Activated naive CD4-positive, alpha-beta T cell treated with anti-CD3 and anti-CD28 coated beads for 36 hours (primary cell): ENCODE measurements at regions of chr18 and their contacts with region 1.

Region 1: DNA sequence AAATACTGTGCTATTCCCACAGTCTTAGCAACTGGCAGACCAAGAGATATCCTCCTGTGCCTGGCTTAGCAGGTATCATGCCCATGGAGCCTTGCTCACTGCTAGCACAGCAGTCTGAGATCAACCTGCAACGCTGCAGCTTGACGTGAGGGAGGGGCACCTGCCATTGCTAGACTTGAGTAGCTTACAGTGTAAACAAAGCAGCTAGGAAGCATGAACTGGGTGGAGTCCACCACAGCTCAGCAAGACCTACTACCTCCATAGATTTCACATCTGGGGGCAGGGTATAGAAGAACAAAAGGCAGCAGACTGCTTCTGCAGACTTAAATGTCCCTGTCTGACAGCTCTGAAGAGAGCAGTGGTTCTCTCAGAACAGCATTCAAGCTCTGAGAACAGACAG is 74.8 kb downstream of the AKAIN1 start:
- DNase-seq: no peak
- H3K4me3 Mint-ChIP-seq: no peak overlapping the region
- H3K27ac Mint-ChIP-seq: no peak overlapping the region
- H3K4me1 Mint-ChIP-seq: peaks cover 8% of the 10 kb centered on the region
- H3K27me3 Mint-ChIP-seq: no peaks in the 10 kb centered on the region

Region 2: GRCh38 chr18:5142859-5143258 is 20.6 kb after region 1 on chr18:
- CTCF ChIA-PET with region 1: no interaction called
- intact Hi-C with region 1: loop called (anchors 1 kb)
- DNase-seq: no peak
- H3K4me3 Mint-ChIP-seq: no peak overlapping the region
- H3K27ac Mint-ChIP-seq: no peak overlapping the region
- H3K4me1 Mint-ChIP-seq: peaks cover 26% of the 10 kb centered on the region
- H3K27me3 Mint-ChIP-seq: no peaks in the 10 kb centered on the region

Region 3: DNA sequence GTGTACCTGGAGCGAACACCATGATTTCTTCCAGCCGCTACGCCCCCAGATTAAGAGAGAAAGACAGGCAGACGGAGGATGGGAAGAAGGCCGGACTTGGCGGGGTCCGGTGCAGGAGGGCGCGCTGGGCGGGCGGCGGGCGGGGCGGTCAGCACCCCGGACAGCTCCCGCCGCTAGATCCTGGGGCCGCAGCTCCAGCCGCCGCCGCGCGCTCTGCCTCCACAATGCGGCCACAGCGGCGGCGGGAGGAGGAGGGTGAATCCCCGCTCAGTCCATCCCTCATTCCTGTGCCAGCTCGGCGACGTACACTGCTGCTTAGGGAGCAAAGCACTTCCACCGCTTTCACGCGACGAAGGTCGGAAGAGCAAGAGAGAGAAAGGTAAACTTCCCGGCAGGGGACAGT is 74.8 kb after region 1 on chr18 and contains the start of gene AKAIN1:
- CTCF ChIA-PET with region 1: no interaction called
- intact Hi-C with region 1: no loop called
- DNase-seq: peak; percentile 30
- H3K4me3 Mint-ChIP-seq: peak within 1 kb of the TSS; percentile 72
- H3K27ac Mint-ChIP-seq: no peak within 1 kb of the TSS
- H3K4me1 Mint-ChIP-seq: peaks cover 20% of the 10 kb centered on the region
- H3K27me3 Mint-ChIP-seq: peaks cover 58% of the 10 kb centered on the region
- total RNA-seq, gene AKAIN1: not detected